CD8-positive, alpha-beta T cell (primary cell): ENCODE measurements at regions of chr13 and their contacts with region 1.

Region 1: DNA sequence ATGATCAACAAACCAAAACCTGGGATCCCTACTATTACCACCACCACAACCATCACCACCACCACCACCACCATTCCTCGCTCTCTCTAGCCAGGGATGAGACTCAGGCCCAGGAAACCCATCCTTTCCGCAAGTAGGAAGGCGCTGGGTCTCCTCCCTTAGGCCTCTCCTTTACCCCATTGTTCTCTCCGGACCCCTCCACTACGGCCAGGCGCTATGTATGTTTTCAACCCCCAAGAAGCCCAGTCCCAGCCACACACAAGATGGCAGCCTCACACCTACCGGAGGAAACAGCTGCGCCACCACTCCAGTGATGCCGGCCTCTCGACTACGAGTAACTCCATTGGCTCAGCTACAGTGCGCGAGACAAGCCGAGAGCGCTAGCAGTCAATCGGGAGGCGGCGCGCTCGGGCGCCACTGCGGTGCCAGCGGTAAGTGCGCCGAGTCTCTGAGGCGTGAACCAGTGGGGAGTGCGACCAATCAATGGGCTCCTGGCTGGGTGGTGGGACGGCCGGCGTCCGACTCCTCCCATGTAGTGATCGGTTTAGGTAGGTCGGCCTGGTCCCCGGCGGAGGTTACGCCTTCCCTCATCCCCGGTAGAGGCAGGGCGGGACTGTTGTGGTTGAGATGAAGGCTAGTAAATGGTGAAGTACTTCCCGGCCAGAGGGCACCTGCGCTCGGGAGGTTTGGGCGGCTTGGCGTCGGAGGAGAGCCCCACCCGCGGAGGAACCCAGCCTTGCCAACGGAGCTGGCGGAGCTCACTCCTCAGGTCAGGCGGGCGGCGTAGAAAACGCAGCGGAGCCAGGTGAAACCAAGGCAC is at the starts of genes CAB39L and SETDB2:
- DNase-seq: peak; percentile 97 to 100 (median 99)
- ATAC-seq: peak; percentile 89
- H3K4me3 ChIP-seq: peak within 1 kb of the TSS; percentile 72 to 76
- H3K4me3 Mint-ChIP-seq: peak within 1 kb of the TSS; percentile 93
- H3K27ac ChIP-seq: peak within 1 kb of the TSS; percentile 91 to 93
- H3K27ac Mint-ChIP-seq: peak within 1 kb of the TSS; percentile 98
- H3K4me1 ChIP-seq: peaks cover 42% of the 10 kb centered on the region
- H3K4me1 Mint-ChIP-seq: peaks cover 51% of the 10 kb centered on the region
- H3K27me3 ChIP-seq: no peaks in the 10 kb centered on the region
- H3K27me3 Mint-ChIP-seq: peaks cover 2% of the 10 kb centered on the region
- CTCF ChIP-seq: no peak
- total RNA-seq, gene CAB39L: 1.6 to 2.1 TPM
- total RNA-seq, gene SETDB2: 8.4 to 9.3 TPM

Region 2: DNA sequence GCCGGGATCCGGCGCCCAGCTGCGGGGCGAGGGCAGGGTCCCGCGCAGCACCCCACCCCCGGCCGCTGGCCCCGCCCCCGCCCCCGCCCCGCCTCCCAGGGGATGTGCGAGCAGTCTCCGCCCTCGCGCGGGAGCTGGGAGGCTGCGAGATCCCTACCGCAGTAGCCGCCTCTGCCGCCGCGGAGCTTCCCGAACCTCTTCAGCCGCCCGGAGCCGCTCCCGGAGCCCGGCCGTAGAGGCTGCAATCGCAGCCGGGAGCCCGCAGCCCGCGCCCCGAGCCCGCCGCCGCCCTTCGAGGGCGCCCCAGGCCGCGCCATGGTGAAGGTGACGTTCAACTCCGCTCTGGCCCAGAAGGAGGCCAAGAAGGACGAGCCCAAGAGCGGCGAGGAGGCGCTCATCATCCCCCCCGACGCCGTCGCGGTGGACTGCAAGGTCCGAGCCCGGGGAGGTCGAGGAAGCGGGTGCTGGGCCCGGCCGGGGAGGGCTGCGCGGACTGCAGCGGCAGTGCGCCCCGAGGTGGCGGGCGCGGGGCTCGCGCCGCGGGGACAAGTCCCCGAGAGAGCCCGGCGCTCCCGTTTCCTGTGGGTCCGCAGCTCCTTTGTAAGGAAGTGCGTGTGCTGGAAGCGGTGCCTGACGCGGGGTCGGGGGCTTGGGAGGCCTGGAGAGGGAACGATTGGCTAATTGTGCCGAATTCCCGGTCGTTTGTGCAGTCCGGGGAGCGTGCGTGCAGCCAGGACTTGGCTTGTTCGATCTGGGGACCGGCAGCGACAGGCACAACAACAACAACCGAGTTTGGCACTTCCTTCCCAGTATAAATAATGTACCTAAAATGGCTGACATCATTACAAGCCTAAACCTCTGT is 1210.6 kb before region 1 on chr13 and contains the start of gene ITM2B:
- CTCF ChIA-PET with region 1: no interaction called
- POLR2A ChIA-PET with region 1: no interaction called
- intact Hi-C with region 1: loop called (anchors 10 kb)
- DNase-seq: peak; percentile 40 to 86 (median 64)
- ATAC-seq: peak; percentile 72
- H3K4me3 ChIP-seq: peak within 1 kb of the TSS; percentile 96 to 98
- H3K4me3 Mint-ChIP-seq: peak within 1 kb of the TSS; percentile 98
- H3K27ac ChIP-seq: peak within 1 kb of the TSS; percentile 92 to 94
- H3K27ac Mint-ChIP-seq: peak within 1 kb of the TSS; percentile 99
- H3K4me1 ChIP-seq: peaks cover 44% of the 10 kb centered on the region
- H3K4me1 Mint-ChIP-seq: peaks cover 62% of the 10 kb centered on the region
- H3K27me3 ChIP-seq: no peaks in the 10 kb centered on the region
- H3K27me3 Mint-ChIP-seq: no peaks in the 10 kb centered on the region
- CTCF ChIP-seq: peak; percentile 59
- total RNA-seq, gene ITM2B: 280 to 308 TPM

Region 3: GRCh38 chr13:48985756-48986155 is 458.2 kb before region 1 on chr13:
- CTCF ChIA-PET with region 1: no interaction called
- POLR2A ChIA-PET with region 1: no interaction called
- intact Hi-C with region 1: no loop called
- DNase-seq: no peak
- ATAC-seq: no peak
- H3K4me3 ChIP-seq: no peak overlapping the region
- H3K4me3 Mint-ChIP-seq: no peak overlapping the region
- H3K27ac ChIP-seq: no peak overlapping the region
- H3K27ac Mint-ChIP-seq: no peak overlapping the region
- H3K4me1 ChIP-seq: no peaks in the 10 kb centered on the region
- H3K4me1 Mint-ChIP-seq: peaks cover 29% of the 10 kb centered on the region
- H3K27me3 ChIP-seq: no peaks in the 10 kb centered on the region
- H3K27me3 Mint-ChIP-seq: no peaks in the 10 kb centered on the region
- CTCF ChIP-seq: no peak

Region 4: GRCh38 chr13:49214917-49215376 is 229.0 kb before region 1 on chr13:
- CTCF ChIA-PET with region 1: no interaction called
- POLR2A ChIA-PET with region 1: no interaction called
- intact Hi-C with region 1: no loop called
- DNase-seq: peak in 8 of 9 experiments; percentile 11 to 68 (median 45)
- ATAC-seq: peak; percentile 89
- H3K4me3 ChIP-seq: no peak overlapping the region
- H3K4me3 Mint-ChIP-seq: no peak overlapping the region
- H3K27ac ChIP-seq: no peak overlapping the region
- H3K27ac Mint-ChIP-seq: no peak overlapping the region
- H3K4me1 ChIP-seq: peaks cover 8% of the 10 kb centered on the region
- H3K4me1 Mint-ChIP-seq: peaks cover 15% of the 10 kb centered on the region
- H3K27me3 ChIP-seq: peaks cover 15 to 19% of the 10 kb centered on the region in 2 experiments
- H3K27me3 Mint-ChIP-seq: peaks cover 32% of the 10 kb centered on the region
- CTCF ChIP-seq: peak; percentile 39

Region 5: GRCh38 chr13:49247643-49248621 is 196.0 kb before region 1 on chr13 and contains the start of gene CDADC1:
- CTCF ChIA-PET with region 1: no interaction called
- POLR2A ChIA-PET with region 1: interaction called, 5 read pairs
- intact Hi-C with region 1: loop called in 1 of 2 experiments (anchors 5 kb)
- DNase-seq: peak; percentile 73 to 93 (median 87)
- ATAC-seq: peak; percentile 74
- H3K4me3 ChIP-seq: peak within 1 kb of the TSS; percentile 83 to 99
- H3K4me3 Mint-ChIP-seq: peak within 1 kb of the TSS; percentile 92
- H3K27ac ChIP-seq: peak within 1 kb of the TSS; percentile 80 to 93
- H3K27ac Mint-ChIP-seq: peak within 1 kb of the TSS; percentile 90
- H3K4me1 ChIP-seq: peaks cover 8% of the 10 kb centered on the region
- H3K4me1 Mint-ChIP-seq: peaks cover 54% of the 10 kb centered on the region
- H3K27me3 ChIP-seq: no peaks in the 10 kb centered on the region
- H3K27me3 Mint-ChIP-seq: no peaks in the 10 kb centered on the region
- CTCF ChIP-seq: no peak
- total RNA-seq, gene CDADC1: 15.9 to 17.2 TPM

Region 6: DNA sequence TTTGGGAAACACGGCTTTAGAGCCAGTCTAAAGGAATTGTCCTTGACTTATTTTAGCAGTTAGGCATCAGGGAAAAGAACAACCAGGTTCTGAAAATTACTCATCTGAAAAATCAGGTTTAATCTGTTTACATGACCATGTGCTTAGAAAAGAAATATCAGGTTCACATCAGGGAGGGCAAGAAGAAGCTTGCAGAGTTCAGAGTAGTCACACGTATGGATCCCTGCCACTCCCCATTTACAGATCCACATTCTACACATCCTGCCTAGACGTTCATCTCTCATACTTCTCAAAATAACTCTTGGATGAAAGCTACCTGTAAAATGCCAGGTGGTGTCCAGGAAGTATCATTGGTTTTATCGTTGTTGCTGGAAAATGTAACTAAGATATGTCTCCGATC is 37.9 kb after region 1 on chr13:
- CTCF ChIA-PET with region 1: no interaction called
- POLR2A ChIA-PET with region 1: interaction called, 14 read pairs
- intact Hi-C with region 1: no loop called
- DNase-seq: no peak
- ATAC-seq: no peak
- H3K4me3 ChIP-seq: no peak overlapping the region
- H3K4me3 Mint-ChIP-seq: no peak overlapping the region
- H3K27ac ChIP-seq: no peak overlapping the region
- H3K27ac Mint-ChIP-seq: no peak overlapping the region
- H3K4me1 ChIP-seq: no peaks in the 10 kb centered on the region
- H3K4me1 Mint-ChIP-seq: no peaks in the 10 kb centered on the region
- H3K27me3 ChIP-seq: no peaks in the 10 kb centered on the region
- H3K27me3 Mint-ChIP-seq: no peaks in the 10 kb centered on the region
- CTCF ChIP-seq: no peak

Region 7: DNA sequence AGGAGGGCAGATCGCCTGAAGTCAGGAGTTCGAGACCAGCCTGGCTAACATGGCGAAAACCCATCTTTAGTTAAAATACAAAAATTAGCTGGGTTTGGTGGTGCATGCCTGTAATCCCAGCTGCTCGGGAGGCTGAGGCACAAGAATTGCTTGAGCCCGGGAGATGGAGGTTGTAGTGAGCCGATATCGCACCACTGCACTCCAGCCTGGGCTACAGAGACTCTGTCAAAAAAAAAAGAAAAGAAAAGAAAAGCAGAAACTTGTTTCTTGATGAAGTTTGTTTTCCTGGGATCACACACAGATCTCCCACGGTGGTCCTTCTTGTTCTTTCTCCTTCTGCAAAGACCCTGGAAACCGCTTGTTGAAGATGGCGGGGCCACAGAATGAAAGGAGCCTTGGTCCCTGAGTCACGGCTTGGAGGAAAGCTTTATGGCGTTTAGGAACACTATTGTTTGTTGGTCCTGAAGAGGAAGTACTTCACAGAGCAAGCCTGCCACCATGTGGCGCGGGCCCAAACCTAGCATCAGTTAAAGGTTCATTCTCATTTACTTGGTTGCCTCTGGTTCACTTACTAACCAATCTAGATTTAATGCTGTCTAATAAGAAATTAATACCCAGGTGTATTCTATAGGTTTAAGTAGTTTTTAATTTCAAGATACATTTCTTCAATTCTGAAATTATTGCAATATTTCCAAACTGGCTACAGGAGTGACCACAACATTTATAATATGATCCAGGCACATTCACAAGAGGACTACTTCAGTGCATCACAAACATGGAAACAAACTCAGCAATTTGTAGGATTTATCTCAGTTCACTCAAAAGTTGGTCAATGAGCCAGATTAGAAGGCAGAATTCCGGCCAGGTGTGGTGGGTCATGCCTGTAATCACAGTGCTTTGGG is 163.1 kb after region 1 on chr13:
- CTCF ChIA-PET with region 1: interaction called, 5 read pairs
- POLR2A ChIA-PET with region 1: no interaction called
- intact Hi-C with region 1: loop called in 1 of 2 experiments (anchors 5 kb)
- DNase-seq: peak; percentile 56 to 87 (median 78)
- ATAC-seq: peak; percentile 99
- H3K4me3 ChIP-seq: peak overlapping the region; percentile 29 to 40
- H3K4me3 Mint-ChIP-seq: peak overlapping the region; percentile 88
- H3K27ac ChIP-seq: no peak overlapping the region
- H3K27ac Mint-ChIP-seq: no peak overlapping the region
- H3K4me1 ChIP-seq: no peaks in the 10 kb centered on the region
- H3K4me1 Mint-ChIP-seq: peaks cover 2% of the 10 kb centered on the region
- H3K27me3 ChIP-seq: no peaks in the 10 kb centered on the region
- H3K27me3 Mint-ChIP-seq: no peaks in the 10 kb centered on the region
- CTCF ChIP-seq: peak; percentile 70

Region 8: DNA sequence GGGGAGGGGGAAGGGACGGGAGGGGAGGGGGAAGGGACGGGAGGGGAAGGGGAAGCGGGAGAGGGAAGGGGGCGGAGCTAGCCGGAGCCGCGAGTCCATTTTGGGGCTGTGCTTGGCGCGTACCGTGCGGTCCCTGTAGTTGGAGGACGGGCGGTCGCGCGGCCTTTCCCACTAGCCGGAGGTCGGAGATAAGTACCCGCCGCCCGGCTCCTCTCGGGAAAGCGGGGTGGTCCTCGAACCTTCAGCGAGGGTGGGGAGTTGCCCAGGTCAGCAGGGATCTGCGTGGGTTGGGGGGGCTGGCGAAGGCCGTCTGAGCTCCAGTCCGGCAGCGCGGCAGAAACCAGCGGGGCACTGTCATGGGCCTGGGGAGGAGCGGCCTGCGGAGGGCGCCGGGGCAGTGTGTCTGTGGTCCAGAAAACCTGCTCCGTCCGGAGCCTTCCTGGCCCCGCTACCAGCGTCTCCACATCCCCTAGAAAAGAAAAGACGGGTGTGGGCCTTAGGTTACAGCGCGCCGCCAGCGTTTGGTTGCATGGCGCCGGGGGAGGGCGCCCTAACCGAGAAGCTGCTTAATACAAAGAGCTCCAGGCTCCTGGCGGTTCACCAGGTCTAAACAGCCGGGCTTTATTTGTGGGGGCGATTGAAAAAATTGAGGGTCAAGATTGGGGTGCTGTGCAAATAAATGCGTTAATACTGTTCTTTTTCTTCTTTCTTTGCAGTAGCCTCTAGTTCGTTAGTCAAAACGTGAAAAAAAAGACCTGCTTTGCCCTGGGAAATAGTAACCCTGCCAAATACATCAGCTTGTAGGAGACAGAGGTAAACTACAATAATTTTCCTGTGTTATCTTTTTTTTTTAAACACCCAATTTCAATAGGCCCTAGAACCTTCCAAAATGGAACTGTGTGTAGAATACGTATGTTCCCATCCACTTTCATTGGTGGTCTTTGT is 553.3 kb after region 1 on chr13 and contains the start of gene TRIM13:
- CTCF ChIA-PET with region 1: no interaction called
- POLR2A ChIA-PET with region 1: no interaction called
- intact Hi-C with region 1: loop called in 1 of 2 experiments (anchors 2 kb)
- DNase-seq: peak; percentile 72 to 90 (median 81)
- ATAC-seq: peak; percentile 80
- H3K4me3 ChIP-seq: peak within 1 kb of the TSS; percentile 87 to 99
- H3K4me3 Mint-ChIP-seq: peak within 1 kb of the TSS; percentile 86
- H3K27ac ChIP-seq: peak within 1 kb of the TSS; percentile 84 to 85
- H3K27ac Mint-ChIP-seq: peak within 1 kb of the TSS; percentile 86
- H3K4me1 ChIP-seq: peaks cover 27% of the 10 kb centered on the region
- H3K4me1 Mint-ChIP-seq: peaks cover 49% of the 10 kb centered on the region
- H3K27me3 ChIP-seq: no peaks in the 10 kb centered on the region
- H3K27me3 Mint-ChIP-seq: no peaks in the 10 kb centered on the region
- CTCF ChIP-seq: peak; percentile 78
- total RNA-seq, gene TRIM13: 24.0 to 24.4 TPM